ENCODE measurements at regions of chr7 and their contacts with region 1.

Region 1: DNA sequence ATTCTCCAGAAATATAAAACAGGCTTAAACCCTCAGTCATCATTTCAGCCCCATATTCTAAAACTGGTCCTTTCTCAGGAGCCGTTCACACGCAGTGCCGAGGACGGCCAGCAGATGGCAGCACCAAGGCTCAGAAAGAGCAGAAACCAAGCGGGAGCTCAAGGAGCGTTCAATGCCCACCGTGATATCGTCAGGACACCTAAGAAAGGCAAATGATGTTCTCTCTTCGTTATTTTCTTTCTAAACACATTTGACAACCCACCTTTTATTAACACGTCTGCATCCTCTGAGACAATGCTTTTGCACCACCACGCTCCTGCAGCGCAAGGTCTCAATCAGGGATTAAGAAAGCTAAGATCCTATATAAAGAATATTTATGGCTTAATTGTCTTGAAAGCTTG is 45.7 kb upstream of the RBM33 start:
- DNase-seq: peak; percentile 94
- ATAC-seq: peak; percentile 92
- H3K4me3 Mint-ChIP-seq: no peak overlapping the region
- H3K27ac Mint-ChIP-seq: no peak overlapping the region
- H3K4me1 Mint-ChIP-seq: peaks cover 14% of the 10 kb centered on the region
- H3K27me3 Mint-ChIP-seq: peaks cover 16% of the 10 kb centered on the region
- CTCF ChIP-seq: peak; percentile 92

Region 2: DNA sequence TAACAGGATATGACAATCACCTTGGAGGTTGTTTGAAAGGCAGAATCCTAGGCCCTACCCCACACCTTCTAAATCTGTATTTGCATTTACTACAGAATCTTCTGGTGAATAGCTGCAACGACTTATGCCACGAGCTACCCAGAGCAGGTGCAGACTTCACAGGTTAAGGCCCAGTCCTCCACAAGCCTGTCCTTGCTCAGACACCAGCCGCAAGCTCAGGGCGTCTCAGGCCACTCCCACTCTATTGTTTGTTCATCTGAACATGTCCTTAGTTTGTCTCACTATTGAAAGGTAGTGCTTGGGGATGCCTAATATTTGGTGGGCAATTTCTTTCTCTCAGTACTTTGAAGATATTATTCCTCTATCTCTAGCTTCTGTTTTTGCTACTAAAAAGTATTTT is 26.7 kb after region 1 on chr7:
- CTCF ChIA-PET with region 1: interaction called, 10 read pairs
- POLR2A ChIA-PET with region 1: no interaction called
- intact Hi-C with region 1: no loop called
- DNase-seq: no peak
- ATAC-seq: no peak
- H3K4me3 Mint-ChIP-seq: no peak overlapping the region
- H3K27ac Mint-ChIP-seq: no peak overlapping the region
- H3K4me1 Mint-ChIP-seq: peaks cover 2% of the 10 kb centered on the region
- H3K27me3 Mint-ChIP-seq: peaks cover 3% of the 10 kb centered on the region
- CTCF ChIP-seq: no peak

Region 3: DNA sequence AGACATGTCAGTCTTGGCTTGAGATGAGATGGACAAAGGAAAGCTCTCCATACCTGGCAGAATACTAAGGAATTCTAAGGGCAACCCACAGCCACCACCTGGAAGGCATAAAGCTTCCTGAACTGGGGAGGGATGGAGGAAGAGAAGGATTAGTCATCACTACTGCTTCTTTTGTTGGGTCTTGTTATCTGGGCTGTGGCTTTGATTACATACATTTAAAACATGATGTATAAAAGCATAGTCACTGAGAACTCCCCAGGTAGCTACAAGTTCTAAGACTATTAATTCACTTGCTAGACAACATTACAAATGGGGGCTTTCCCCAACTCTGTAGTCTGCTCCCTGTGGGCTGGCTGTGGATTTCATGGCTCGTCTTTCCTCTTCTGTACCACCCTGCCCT is 103.8 kb after region 1 on chr7:
- CTCF ChIA-PET with region 1: interaction called, 21 read pairs
- POLR2A ChIA-PET with region 1: no interaction called
- intact Hi-C with region 1: no loop called
- DNase-seq: no peak
- ATAC-seq: peak; percentile 30
- H3K4me3 Mint-ChIP-seq: no peak overlapping the region
- H3K27ac Mint-ChIP-seq: peak overlapping the region; percentile 4
- H3K4me1 Mint-ChIP-seq: peaks cover 32% of the 10 kb centered on the region
- H3K27me3 Mint-ChIP-seq: no peaks in the 10 kb centered on the region
- CTCF ChIP-seq: no peak

Region 4: DNA sequence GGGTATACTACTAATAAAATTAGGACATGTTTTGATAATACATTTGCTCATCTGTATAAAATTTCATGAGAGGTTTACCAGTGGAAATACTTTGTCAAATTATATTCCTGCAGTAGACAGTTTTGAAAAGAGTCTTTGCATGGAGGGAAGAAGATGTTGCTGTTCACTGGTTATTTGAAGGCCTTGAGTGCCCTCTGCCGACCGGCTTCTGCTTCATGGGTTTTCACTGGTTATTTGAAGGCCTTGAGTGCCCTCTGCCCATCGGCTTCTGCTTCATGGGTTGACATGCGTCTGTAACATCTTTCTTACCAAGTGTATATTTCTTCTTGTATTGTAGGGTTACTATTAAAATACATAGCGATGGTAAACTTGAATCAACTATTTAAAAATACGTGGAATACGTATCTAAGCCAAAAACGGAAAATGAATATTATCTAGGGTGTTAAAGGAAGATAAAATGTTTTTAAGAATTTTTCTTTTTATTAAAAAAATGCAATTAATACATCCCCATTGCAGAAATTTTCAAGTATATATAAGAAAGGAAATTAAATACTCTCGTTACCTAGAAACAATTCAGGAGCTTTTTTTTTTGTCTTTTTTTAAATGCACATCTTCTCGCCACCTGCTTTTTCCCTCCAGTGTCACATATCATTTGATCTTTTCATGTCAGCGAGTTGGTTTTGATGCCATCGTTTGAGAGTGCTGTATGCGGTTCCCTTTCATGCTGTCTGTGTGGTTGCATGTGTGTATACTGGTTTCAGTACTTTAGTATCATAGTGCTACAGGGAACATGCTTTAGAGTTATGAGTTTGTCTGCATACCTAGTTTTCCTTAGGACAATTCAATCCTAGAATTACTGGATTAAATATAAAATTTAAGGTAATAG is 140.1 kb after region 1 on chr7:
- CTCF ChIA-PET with region 1: interaction called, 43 read pairs
- POLR2A ChIA-PET with region 1: no interaction called
- intact Hi-C with region 1: loop called (anchors 10 kb)
- DNase-seq: peak; percentile 89
- ATAC-seq: peak; percentile 66
- H3K4me3 Mint-ChIP-seq: peak overlapping the region; percentile 59
- H3K27ac Mint-ChIP-seq: peak overlapping the region; percentile 82
- H3K4me1 Mint-ChIP-seq: peaks cover 68% of the 10 kb centered on the region
- H3K27me3 Mint-ChIP-seq: no peaks in the 10 kb centered on the region
- CTCF ChIP-seq: peak; percentile 73

Region 5: DNA sequence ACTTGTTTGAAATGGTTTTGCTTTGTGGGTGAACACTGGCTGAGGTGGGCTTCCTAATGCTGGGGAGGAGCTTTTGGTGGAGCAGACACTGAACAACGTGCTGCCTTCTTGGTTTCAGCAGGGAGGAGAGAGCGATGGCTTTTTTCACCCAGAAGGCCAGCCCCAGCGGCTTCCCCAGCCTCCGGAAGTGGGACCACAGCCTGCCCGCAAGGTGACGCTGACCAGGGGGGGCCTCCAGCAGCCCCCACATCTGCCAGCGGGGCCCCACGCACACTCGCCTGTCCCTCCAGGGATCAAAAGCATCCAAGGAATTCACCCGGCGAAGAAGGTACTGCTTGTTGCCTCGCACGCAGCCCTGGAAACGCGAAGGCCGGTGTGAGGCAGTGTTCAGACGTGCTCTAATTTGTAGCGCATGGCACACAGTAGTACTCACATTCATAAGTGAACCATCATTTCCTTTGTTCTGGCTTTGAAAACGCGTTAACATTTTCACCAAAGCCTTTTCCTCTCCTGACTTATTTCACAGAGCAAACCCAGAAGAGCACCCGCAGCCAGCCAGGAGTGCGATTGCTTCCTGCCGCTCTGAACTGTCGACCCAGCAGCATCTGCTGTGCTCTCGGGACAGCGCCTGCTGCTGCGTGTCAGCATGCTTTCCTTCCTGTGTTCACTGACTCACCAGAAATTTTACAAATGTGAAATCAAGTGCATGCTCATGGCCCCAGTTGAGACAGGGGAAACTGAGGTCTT is 165.1 kb after region 1 on chr7:
- CTCF ChIA-PET with region 1: interaction called, 158 read pairs
- POLR2A ChIA-PET with region 1: interaction called, 3 read pairs
- intact Hi-C with region 1: loop called (anchors 1 kb)
- DNase-seq: peak; percentile 80
- ATAC-seq: peak; percentile 77
- H3K4me3 Mint-ChIP-seq: peak overlapping the region; percentile 69
- H3K27ac Mint-ChIP-seq: peak overlapping the region; percentile 95
- H3K4me1 Mint-ChIP-seq: peaks cover 62% of the 10 kb centered on the region
- H3K27me3 Mint-ChIP-seq: no peaks in the 10 kb centered on the region
- CTCF ChIP-seq: no peak